AG04449 (cell line): ENCODE measurements at regions of chr3 and their contacts with region 1.

Region 1: GRCh38 chr3:126389112-126389793 is 5.5 kb upstream of the CFAP100 start:
- DNase-seq: no peak
- H3K4me3 ChIP-seq: peak overlapping the region; percentile 56
- CTCF ChIP-seq: peak; percentile 97

Region 2: DNA sequence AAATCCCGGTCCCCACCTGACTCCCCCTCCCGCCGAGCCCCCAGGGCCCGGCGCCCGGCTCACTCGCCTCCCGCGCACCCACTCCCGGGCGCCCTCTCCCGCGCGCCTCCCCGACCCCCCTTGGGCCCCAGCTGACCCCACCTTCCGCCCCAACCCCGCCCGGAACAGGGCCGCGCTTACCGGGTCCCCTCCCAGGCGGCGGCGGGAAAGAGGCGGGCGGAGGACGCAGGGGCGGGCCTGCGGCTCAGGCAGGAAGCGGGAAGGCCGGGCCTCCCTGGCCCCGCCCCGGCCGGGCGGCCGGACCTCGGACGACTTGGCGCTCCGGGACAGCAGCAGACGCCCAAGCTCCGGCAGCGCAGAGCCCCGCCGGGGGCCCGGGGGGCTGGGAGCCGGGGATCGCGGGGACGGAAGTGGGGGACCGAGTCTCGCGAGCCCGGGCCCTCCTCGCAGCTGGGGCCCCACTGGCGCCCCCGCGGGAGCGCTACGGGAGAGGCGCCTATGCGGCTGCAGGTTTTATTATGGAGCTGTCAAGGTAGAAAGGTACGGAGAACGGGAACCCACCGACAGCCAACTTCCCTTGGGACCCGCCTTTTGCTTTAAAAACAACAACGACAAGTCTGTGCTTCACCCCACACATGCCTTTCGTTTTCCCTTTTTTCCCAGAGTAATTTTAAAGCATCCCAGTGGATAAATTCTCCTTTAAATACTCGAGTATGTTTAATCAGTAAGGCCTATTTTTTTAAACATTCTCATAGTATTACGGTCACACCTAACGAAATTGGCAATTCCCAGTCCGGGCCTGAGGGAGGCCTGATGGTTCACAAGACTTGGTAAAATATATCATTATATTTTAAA is 305.1 kb before region 1 on chr3 and contains the start of gene SLC41A3:
- CTCF ChIA-PET with region 1: no interaction called
- POLR2A ChIA-PET with region 1: no interaction called
- DNase-seq: no peak
- H3K4me3 ChIP-seq: peak within 1 kb of the TSS; percentile 70
- CTCF ChIP-seq: peak; percentile 76

Region 3: DNA sequence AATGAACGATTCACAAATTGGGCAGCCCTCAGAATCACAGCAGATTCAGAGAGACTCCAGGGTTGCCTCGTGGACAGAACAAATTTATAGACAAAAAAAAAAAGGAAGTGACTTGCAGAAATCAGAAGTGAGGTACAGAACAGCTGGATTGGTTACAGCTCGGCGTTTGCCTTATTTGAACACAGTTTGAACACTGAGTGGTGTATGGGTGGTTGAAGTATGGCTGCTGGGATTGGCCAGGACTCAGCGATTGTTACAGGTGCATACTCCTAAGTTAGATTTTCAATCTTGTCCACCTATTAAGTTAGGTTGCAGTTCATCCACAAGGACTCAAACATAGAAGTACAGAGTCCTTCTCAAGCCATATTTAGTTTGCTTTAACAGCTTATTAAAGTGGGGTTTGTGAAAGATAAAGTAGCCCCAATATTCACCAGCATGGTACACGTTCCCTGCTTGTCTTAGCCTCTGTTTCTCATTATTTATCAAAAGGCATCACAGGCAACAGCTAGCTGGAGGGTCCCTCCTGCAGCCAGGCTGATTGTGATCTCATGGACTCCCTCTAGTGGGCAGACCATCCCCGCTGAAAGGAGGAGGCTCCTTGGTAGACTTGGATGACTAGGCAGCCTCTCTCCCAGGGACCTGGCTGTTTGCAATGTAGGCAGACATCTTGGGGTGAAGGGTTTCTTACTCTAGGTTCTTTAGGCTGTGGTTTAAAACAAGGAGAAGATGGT is 191.2 kb before region 1 on chr3:
- CTCF ChIA-PET with region 1: interaction called, 52 read pairs
- POLR2A ChIA-PET with region 1: no interaction called
- DNase-seq: no peak
- H3K4me3 ChIP-seq: no peak overlapping the region
- CTCF ChIP-seq: peak; percentile 89

Region 4: DNA sequence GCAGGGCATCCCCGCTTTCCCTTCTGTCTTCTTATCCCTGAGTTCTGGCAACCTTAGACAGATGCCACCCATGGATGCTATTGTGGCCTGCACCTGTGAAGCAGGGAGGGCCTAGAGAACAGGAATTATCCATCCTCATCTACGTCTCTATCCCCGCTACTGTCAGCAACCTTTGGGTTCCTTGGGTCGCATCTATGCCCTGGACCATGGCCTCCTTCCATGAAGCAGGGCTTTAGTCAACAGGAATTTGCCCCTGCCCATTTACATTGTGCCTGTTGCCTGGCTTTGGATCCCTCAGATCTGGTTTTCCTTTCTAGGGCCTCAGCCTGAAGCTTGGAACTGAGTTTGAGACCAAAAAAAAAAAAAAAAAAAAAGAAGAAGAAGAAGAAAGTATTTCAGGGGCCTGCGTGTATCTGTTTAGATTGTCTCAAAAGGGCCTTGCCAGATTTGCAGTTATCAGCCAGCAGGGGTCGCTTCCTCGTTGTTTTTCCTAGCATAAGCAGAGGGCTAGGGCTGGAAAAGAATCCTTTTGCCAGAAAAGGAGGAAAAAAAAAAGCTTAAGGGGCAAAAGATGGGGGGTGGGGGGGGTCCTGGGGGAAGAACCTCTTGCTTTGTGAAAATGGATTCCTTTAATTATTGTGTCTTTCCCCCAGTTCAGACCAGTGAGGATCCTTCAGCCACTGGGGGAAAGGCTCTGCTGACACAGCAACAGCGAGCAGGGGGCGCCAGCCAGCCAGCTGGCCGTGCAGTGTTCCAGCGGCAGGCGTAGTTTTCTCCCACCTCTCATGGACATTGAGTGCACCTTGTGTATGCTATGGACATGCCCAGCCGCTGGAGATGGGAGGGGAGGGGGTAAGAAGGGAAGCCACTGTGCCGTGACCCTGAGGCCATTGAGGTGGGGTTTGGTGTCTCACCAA is 143.2 kb before region 1 on chr3:
- CTCF ChIA-PET with region 1: interaction called, 41 read pairs
- POLR2A ChIA-PET with region 1: no interaction called
- DNase-seq: no peak
- H3K4me3 ChIP-seq: no peak overlapping the region
- CTCF ChIP-seq: peak; percentile 59

Region 5: GRCh38 chr3:126252373-126252772 is 136.9 kb before region 1 on chr3:
- CTCF ChIA-PET with region 1: interaction called, 41 read pairs
- POLR2A ChIA-PET with region 1: no interaction called
- DNase-seq: no peak
- H3K4me3 ChIP-seq: no peak overlapping the region
- CTCF ChIP-seq: no peak

Region 6: DNA sequence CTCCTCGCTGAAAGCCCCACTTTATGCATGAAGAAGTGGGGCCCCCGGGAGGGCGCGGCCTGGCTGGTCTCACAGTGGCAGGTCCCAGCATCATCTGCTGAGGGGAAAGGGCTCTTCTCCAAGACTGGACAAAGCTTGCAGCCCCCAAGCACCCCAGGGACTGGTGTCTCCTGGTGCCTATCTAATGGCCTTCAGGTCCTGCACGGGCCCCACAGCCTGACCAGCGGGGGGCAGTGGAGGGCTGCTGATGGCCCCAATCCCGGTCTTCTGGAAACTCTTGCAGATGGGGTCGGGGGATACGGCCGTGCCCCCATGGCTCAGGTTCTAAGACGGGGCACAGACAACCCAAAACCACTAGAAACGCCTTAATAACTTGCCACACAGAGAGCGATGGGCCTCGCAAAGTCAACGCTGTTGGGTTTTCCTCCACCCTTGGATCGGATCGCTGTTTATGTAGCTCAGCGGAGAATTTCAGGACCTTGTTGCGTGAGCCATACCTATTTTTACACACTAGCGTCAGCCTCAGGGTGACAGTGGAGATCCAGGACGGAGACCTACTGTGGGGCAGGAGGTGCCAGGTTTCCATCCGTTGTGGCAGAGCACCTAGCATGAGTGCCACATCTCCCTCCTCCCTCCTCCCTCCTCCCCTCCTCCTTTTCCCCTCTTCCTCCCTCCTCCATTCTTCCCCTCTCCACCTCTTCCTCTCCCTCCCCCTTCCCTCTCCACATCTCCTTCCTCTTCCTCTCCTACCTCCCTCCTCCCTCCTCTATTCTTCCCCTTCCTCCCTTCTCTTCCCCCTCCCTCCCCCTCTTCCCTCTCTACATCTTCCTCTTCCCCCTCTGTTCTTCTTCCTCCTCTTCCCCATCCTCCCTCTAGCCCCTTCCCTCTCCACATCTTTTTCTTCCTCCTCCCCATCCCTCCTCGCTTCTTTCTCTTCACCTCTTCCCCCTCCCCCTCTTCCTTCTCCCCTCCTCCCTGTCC is 129.6 kb before region 1 on chr3:
- CTCF ChIA-PET with region 1: interaction called, 11 read pairs
- POLR2A ChIA-PET with region 1: no interaction called
- DNase-seq: no peak
- H3K4me3 ChIP-seq: no peak overlapping the region
- CTCF ChIP-seq: peak; percentile 60

Region 7: DNA sequence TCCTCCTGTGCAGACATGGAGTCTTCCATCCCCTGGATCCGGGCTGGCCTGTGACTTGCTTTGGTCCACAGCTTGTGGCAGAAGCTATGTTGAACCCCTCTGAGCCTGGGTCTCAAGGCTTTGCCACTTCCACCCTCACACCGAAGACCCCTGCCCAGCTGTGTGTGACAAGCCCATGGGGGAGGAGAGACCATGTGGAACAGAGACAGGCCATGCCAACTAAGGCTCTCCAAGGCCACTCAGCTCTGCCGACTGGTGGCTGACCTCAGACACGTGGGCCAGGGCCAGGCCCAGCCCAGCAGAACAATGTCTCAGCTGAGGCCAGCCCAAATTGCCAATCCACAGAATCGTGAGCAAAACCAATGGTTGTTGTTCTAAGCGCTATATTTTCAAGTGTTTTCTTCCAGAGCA is 10.9 kb before region 1 on chr3:
- CTCF ChIA-PET with region 1: interaction called, 29 read pairs
- POLR2A ChIA-PET with region 1: no interaction called
- DNase-seq: no peak
- H3K4me3 ChIP-seq: no peak overlapping the region
- CTCF ChIP-seq: no peak